PC-3 (cell line): ENCODE measurements at regions of chr9 and their contacts with region 1.

Region 1: DNA sequence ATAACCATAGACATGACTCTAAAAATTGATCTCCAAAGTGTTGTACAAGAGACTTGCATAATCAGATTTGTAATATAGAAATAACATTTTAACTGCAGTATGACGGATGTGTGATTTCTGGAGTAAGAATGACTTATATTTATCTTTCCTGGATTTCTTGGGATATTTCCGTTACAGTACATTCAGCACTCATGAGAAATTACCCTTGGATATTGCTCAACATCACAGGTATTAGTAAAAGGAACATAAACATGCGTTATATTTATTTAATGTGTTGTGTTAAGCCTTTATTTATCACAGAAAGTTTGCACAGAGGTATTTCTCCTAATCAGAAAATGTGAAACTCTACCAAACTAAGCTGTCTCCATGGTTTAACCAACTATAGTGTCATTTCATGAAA is 1823.9 kb upstream of the C9orf72 start:
- DNase-seq: peak; percentile 78
- ATAC-seq: peak; percentile 82
- H3K4me3 ChIP-seq: peak overlapping the region; percentile 56
- H3K27ac ChIP-seq: peak overlapping the region; percentile 87
- H3K4me1 ChIP-seq: peaks cover 19% of the 10 kb centered on the region
- H3K27me3 ChIP-seq: no peaks in the 10 kb centered on the region
- CTCF ChIP-seq: no peak

Region 2: DNA sequence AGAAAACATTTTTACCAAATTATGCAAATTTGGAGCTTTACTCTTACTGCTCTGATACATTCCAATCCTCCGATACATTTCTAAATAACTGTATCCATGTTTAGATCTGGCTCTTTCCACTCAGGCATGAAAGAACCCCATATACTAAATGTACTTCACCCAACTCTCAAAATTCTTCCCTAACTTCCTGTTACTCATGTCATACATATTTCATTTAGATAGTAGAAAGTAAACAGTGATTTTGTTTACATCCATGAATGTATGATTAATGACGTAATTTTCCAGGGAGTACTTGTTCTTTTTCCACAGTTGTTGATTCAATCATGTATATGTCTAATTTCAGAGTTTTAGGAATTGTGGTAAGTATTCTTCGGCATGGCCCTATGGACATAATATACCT is 397.3 kb before region 1 on chr9:
- CTCF ChIA-PET with region 1: no interaction called
- POLR2A ChIA-PET with region 1: no interaction called
- intact Hi-C with region 1: no loop called
- DNase-seq: peak; percentile 69
- ATAC-seq: peak; percentile 73
- H3K4me3 ChIP-seq: no peak overlapping the region
- H3K27ac ChIP-seq: peak overlapping the region; percentile 39
- H3K4me1 ChIP-seq: peaks cover 23% of the 10 kb centered on the region
- H3K27me3 ChIP-seq: no peaks in the 10 kb centered on the region
- CTCF ChIP-seq: no peak

Region 3: DNA sequence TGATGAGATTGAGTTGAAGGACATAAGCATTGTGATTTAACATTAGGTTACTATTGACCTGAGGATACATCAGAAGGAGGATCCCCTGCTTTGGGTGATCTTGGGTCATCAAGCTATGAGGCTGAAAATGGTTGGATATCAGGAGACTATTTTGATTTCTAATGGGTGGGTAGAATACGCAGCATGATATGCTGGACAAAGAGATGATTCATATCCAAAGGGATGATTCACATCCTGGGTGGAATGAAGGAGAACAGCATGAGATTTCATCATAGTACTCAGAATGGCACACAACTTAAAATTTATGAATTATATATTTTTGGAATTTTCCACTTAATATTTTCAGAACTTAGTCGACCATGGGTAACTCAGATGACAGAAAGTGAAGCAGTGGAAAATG is 64.4 kb before region 1 on chr9:
- CTCF ChIA-PET with region 1: no interaction called
- POLR2A ChIA-PET with region 1: no interaction called
- intact Hi-C with region 1: loop called (anchors 2 kb)
- DNase-seq: peak; percentile 79
- ATAC-seq: peak; percentile 88
- H3K4me3 ChIP-seq: no peak overlapping the region
- H3K27ac ChIP-seq: peak overlapping the region; percentile 63
- H3K4me1 ChIP-seq: peaks cover 12% of the 10 kb centered on the region
- H3K27me3 ChIP-seq: no peaks in the 10 kb centered on the region
- CTCF ChIP-seq: no peak

Region 4: DNA sequence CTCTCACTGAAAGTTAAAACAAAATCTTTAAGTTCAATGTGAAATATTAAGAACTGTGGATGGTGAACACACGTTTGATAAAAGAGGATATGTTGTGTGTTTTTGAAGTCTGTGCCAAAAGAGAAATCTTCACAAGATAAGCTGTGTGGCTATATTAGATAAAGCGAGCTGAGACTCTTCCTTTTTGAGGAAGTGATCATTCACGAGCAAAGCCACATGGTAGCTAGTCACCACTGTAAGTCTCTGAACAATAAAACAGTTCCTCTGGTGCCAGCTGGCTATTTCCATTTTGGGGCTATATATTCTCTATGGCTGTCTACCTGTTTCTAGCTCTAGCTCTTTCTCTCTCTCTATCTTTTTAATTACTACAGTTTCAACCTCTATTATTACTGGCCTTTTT is 25.3 kb after region 1 on chr9:
- CTCF ChIA-PET with region 1: no interaction called
- POLR2A ChIA-PET with region 1: no interaction called
- intact Hi-C with region 1: no loop called
- DNase-seq: no peak
- ATAC-seq: no peak
- H3K4me3 ChIP-seq: no peak overlapping the region
- H3K27ac ChIP-seq: no peak overlapping the region
- H3K4me1 ChIP-seq: peaks cover 7% of the 10 kb centered on the region
- H3K27me3 ChIP-seq: no peaks in the 10 kb centered on the region
- CTCF ChIP-seq: no peak

Region 5: GRCh38 chr9:29439961-29440360 is 42.8 kb after region 1 on chr9:
- CTCF ChIA-PET with region 1: no interaction called
- POLR2A ChIA-PET with region 1: no interaction called
- intact Hi-C with region 1: loop called (anchors 5 kb)
- DNase-seq: peak; percentile 93
- ATAC-seq: peak; percentile 91
- H3K4me3 ChIP-seq: peak overlapping the region; percentile 64
- H3K27ac ChIP-seq: peak overlapping the region; percentile 100
- H3K4me1 ChIP-seq: peaks cover 46% of the 10 kb centered on the region
- H3K27me3 ChIP-seq: no peaks in the 10 kb centered on the region
- CTCF ChIP-seq: no peak

Region 6: DNA sequence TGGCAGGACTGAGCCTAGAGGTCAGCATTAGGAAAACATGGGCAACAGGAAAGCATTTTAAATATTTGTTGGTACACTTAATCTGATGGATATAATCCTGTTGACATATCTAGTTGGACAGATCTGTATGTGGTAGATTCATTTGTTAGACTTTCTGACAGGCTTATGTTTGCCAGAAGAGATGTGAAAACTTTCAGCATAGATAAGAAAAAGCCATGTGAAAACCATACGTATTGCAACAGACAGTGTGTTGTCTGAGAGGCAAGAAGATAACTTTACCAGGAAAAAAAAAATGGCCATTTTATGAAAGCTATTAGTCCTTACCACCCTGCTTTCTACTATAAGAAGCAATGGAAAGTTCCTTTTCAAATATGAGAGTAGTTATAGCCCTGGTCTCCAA is 78.3 kb after region 1 on chr9:
- CTCF ChIA-PET with region 1: no interaction called
- POLR2A ChIA-PET with region 1: no interaction called
- intact Hi-C with region 1: no loop called
- DNase-seq: no peak
- ATAC-seq: no peak
- H3K4me3 ChIP-seq: no peak overlapping the region
- H3K27ac ChIP-seq: no peak overlapping the region
- H3K4me1 ChIP-seq: no peaks in the 10 kb centered on the region
- H3K27me3 ChIP-seq: no peaks in the 10 kb centered on the region
- CTCF ChIP-seq: no peak

Region 7: DNA sequence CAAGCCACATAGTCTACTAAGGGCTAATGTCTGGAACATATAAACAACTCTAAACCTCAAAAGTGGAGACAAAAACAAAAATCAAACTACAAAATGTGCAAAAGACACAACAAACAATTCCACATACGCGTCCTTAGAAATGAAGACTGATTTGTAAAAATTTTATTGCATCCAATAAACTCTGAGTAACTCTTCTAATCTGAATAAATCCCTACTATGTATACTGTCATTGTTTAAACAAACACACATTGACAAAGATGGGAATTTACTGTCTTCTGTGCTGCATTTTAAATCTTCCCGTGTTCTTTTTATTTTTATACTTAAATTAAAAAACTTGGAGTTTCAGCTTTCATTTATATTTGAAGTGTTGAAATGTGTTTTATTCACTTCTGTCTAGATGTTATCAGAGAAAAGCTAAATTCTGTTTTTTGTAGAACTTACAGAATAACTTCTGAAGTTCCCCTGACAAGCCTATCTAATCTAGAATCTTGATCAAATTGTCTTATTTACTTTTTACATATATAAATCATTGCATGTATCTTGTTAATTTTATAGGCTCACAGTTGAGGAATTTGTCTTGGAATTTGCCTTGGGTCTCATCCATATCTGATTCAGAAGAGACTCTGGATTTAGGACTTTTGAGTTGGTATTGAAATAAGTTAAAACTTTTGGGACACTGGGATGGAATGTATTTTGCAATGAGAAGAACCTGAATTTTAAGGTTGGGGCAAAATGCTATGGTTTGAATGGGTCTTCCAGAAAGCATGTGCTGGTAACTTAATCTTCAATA is 240.5 kb after region 1 on chr9:
- CTCF ChIA-PET with region 1: no interaction called
- POLR2A ChIA-PET with region 1: no interaction called
- intact Hi-C with region 1: loop called (anchors 1 kb)
- DNase-seq: peak; percentile 76
- ATAC-seq: peak; percentile 89
- H3K4me3 ChIP-seq: peak overlapping the region; percentile 40; the same call in 1 of the 2 replicates
- H3K27ac ChIP-seq: peak overlapping the region; percentile 60
- H3K4me1 ChIP-seq: peaks cover 32% of the 10 kb centered on the region
- H3K27me3 ChIP-seq: no peaks in the 10 kb centered on the region
- CTCF ChIP-seq: no peak